Activated CD4-positive, alpha-beta T cell treated with anti-CD3 and anti-CD28 coated beads for 36 hours (primary cell): ENCODE measurements at regions of chr7 and their contacts with region 1.

Region 1: DNA sequence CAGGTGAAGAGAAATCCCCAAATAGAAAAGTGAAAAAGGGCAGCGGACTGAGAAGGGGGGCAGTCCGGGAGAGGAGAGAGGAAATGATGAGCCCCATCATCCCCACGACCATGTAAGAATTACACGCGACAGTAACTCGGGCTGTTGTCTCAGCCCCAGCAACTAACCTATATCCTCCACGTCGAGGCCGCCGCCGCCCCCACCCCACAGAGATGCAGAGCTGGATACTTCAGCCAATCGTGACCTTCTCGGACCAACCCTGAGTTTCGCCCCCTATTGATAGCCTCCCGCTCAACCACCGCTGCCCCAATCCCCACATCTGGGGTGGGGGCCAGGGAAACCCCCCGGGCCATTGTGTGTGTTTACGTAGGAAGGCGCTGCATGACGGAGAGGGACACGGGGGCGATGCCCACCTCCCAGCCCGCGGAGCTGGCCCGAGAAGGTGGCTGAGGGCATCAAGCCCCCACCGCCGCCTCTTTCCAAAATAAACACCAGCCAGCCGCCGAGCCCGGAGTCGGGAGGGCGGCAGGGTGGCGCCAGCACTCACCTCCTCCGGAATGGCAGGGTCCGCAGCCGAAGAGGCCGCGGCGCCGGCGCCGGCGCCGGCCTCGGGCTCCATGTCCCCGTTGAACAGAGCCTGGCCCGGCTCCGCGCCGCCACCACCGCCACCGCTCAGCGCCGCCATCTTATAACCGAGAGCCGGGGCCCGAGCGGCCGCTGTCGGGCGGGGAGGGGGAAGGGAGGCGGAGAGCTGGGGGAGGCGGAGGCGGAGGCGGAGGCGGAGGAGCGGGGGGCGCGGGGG is 509 bp downstream of the BRAF start:
- DNase-seq: peak; percentile 79
- ATAC-seq: peak; percentile 71
- H3K4me3 Mint-ChIP-seq: no peak overlapping the region
- H3K27ac Mint-ChIP-seq: no peak overlapping the region
- H3K4me1 Mint-ChIP-seq: peaks cover 9% of the 10 kb centered on the region
- H3K27me3 Mint-ChIP-seq: no peaks in the 10 kb centered on the region

Region 2: GRCh38 chr7:140022582-140023211 is 901.5 kb before region 1 on chr7:
- CTCF ChIA-PET with region 1: no interaction called
- POLR2A ChIA-PET with region 1: no interaction called
- intact Hi-C with region 1: no loop called
- DNase-seq: no peak
- ATAC-seq: no peak
- H3K4me3 Mint-ChIP-seq: no peak overlapping the region
- H3K27ac Mint-ChIP-seq: no peak overlapping the region
- H3K4me1 Mint-ChIP-seq: no peaks in the 10 kb centered on the region
- H3K27me3 Mint-ChIP-seq: no peaks in the 10 kb centered on the region

Region 3: GRCh38 chr7:140403878-140404564 is 520.2 kb before region 1 on chr7 and contains the start of gene RAB19:
- CTCF ChIA-PET with region 1: no interaction called
- POLR2A ChIA-PET with region 1: no interaction called
- intact Hi-C with region 1: loop called in 1 of 2 experiments (anchors 10 kb)
- DNase-seq: peak; percentile 63
- ATAC-seq: peak; percentile 77
- H3K4me3 Mint-ChIP-seq: peak within 1 kb of the TSS; percentile 90
- H3K27ac Mint-ChIP-seq: peak within 1 kb of the TSS; percentile 97
- H3K4me1 Mint-ChIP-seq: peaks cover 35% of the 10 kb centered on the region
- H3K27me3 Mint-ChIP-seq: no peaks in the 10 kb centered on the region
- total RNA-seq, gene RAB19: 11.3 to 12.8 TPM

Region 4: GRCh38 chr7:140696680-140697446 is 227.4 kb before region 1 on chr7 and contains the start of gene NDUFB2:
- CTCF ChIA-PET with region 1: interaction called, 3 read pairs
- POLR2A ChIA-PET with region 1: no interaction called
- intact Hi-C with region 1: loop called (anchors 1 to 2 kb)
- DNase-seq: peak; percentile 84
- ATAC-seq: peak; percentile 91
- H3K4me3 Mint-ChIP-seq: peak within 1 kb of the TSS; percentile 90
- H3K27ac Mint-ChIP-seq: peak within 1 kb of the TSS; percentile 97
- H3K4me1 Mint-ChIP-seq: peaks cover 30% of the 10 kb centered on the region
- H3K27me3 Mint-ChIP-seq: no peaks in the 10 kb centered on the region
- total RNA-seq, gene NDUFB2: 83.8 to 162 TPM

Region 5: GRCh38 chr7:140881507-140882228 is 42.6 kb before region 1 on chr7:
- CTCF ChIA-PET with region 1: no interaction called
- POLR2A ChIA-PET with region 1: interaction called, 6 read pairs
- intact Hi-C with region 1: loop called in 1 of 2 experiments (anchors 2 kb)
- DNase-seq: no peak
- ATAC-seq: peak; percentile 75
- H3K4me3 Mint-ChIP-seq: no peak overlapping the region
- H3K27ac Mint-ChIP-seq: peak overlapping the region; percentile 2
- H3K4me1 Mint-ChIP-seq: peaks cover 53% of the 10 kb centered on the region
- H3K27me3 Mint-ChIP-seq: no peaks in the 10 kb centered on the region

Region 6: DNA sequence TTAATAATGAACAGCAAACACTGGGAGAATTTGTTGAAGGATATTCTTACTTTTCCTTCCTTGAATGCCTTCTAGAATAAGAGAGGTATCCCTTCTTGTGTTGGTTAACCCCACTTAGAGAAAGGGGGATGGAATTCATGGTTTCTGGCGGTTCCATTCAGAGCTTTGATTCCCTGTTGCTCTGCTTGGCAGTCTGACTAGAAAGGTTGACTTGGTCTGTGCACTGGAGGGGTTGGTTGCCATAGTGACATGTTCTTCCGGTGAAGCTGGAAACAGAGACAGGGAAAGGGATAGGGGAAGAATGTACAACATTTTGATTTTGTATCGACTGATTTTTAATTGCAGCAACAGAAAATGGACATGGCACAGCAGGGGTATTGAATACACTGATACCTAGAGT is 152.2 kb after region 1 on chr7:
- CTCF ChIA-PET with region 1: no interaction called
- POLR2A ChIA-PET with region 1: no interaction called
- intact Hi-C with region 1: no loop called
- DNase-seq: no peak
- ATAC-seq: no peak
- H3K4me3 Mint-ChIP-seq: no peak overlapping the region
- H3K27ac Mint-ChIP-seq: no peak overlapping the region
- H3K4me1 Mint-ChIP-seq: peaks cover 13% of the 10 kb centered on the region
- H3K27me3 Mint-ChIP-seq: peaks cover 25% of the 10 kb centered on the region

Region 7: DNA sequence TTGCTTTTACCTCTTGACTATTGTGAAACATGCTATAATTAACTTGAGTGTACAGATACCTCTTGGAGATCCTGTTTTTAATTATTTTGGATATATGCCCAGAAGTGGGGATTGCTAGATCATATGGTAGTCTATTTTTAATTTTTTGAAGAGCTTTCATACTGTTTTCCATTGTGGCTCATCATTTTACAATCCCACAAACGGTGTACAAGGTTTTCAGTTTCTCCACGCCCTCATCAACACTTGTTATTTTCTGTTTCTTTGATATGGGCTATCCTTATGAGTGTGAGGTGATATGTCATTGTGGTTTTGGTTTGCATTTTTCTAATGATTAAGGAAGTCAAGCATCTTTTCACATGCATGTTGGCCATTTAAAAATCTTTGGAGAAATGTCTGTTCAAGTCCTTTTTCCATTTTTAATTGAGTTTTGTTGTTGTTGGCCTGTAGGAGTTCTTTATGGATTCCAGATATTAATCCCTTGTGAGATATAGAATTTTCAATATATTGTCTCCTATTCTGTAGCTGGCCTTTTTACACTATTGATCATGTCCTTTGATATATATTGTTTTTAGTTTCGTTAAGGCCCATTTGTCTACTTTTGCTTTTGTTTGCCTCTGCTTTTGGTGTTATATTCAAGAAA is 634.4 kb after region 1 on chr7:
- CTCF ChIA-PET with region 1: no interaction called
- POLR2A ChIA-PET with region 1: no interaction called
- intact Hi-C with region 1: loop called in 1 of 2 experiments (anchors 2 kb)
- DNase-seq: no peak
- ATAC-seq: peak; percentile 94
- H3K4me3 Mint-ChIP-seq: no peak overlapping the region
- H3K27ac Mint-ChIP-seq: peak overlapping the region; percentile 65
- H3K4me1 Mint-ChIP-seq: peaks cover 64% of the 10 kb centered on the region
- H3K27me3 Mint-ChIP-seq: no peaks in the 10 kb centered on the region